ENCODE measurements at regions of chr16 and their contacts with region 1.

Region 1: DNA sequence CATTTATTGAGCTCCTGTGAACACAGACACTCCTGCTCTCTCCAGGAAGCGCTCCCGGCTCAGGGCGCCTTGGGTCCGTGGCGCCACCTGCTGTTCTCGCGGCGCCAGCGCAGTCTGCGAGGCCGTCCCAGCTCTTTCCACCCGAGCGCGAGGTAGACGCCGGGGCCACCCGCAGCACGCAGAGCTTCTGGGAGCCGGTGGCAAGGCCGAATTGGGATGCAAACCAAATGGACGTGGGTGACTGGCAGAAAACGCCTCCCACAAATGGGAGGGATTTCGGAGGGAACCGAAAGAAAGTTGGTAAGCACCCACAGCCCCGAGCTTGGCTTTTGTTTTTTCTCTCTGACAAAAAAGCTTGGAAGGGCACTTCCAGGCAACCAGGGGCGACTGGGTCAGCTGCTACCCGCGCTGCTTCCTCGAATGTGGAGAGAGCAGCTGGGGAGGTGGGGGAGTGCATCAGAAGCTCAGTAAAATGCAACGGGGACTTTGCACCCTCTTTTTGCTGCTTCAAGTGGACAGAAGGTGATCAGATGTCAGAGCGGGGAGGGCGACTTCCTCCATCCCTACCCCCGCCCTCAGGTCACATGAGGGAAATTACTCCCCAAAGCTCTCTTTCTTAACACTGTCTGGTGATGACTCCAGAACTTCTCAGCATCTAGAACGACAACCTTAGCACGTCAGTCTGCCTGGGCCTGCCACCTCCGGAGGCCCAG is 13.5 kb upstream of the N4BP1 start:
- DNase-seq: peak; percentile 71
- H3K4me3 ChIP-seq: peak overlapping the region; percentile 53
- H3K27ac ChIP-seq: peak overlapping the region; percentile 75
- H3K27me3 ChIP-seq: no peaks in the 10 kb centered on the region
- CTCF ChIP-seq: peak; percentile 99

Region 2: DNA sequence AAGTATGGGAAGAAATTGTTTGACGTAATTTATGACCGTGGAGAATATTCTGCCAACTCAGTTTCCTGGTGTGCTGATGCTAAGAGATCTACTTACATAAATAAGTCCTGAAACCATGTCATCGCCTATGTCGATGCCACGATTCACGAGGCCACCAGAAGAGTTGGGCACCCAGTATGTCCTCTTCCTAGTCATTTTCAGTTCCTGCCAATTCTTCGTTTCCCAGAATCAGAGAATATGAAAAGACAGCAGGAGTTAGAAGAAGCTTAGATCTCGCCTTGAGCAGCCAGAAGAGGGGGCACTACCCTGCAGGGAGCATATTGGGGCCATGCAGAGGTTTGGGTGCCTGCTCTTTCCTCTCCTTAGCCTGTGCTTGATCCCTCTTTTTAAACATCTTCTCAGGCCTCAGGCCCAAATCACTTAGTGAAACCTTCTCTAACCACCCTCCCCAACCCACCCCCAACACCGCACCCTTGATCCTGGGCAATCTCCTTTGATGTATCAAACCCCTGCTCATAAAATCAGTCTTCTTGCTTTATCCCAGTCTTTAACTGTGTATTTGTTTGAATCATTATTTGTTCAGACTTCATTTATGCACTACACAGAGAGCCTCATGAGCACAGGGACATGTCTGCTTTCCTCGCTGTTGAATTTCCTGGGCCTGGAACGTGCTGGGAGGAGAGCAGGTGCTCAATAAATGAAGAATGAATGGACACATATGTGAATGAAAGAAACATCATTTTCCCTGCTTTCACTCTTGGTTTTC is 391.6 kb before region 1 on chr16:
- CTCF ChIA-PET with region 1: interaction called, 40 read pairs
- POLR2A ChIA-PET with region 1: no interaction called
- DNase-seq: peak; percentile 2
- H3K4me3 ChIP-seq: no peak overlapping the region
- H3K27ac ChIP-seq: no peak overlapping the region
- H3K27me3 ChIP-seq: no peaks in the 10 kb centered on the region
- CTCF ChIP-seq: peak; percentile 74

Region 3: DNA sequence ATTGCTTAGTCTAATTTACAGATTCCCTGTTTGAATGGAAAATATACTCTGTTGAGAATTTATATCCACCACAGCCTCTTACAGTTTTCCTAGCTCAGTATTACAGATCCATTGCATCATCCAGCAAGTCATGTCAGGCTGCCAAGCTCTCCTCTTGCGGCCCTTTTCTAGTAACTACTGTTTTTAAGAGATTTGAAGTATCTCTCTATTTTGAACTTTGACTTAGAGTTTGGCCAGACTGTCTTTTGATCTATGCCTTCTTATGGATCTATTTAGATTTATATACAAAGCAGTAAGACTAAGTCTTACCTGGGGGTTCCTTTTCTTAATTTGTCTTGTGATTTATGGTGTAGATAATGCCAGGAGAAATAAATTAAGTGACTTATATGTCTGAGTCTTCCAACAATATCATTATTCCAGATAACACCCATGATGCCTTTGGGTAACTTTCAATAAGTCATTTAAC is 323.0 kb before region 1 on chr16:
- CTCF ChIA-PET with region 1: interaction called, 10 read pairs
- POLR2A ChIA-PET with region 1: no interaction called
- DNase-seq: peak; percentile 60
- H3K4me3 ChIP-seq: no peak overlapping the region
- H3K27ac ChIP-seq: no peak overlapping the region
- H3K27me3 ChIP-seq: no peaks in the 10 kb centered on the region
- CTCF ChIP-seq: no peak

Region 4: DNA sequence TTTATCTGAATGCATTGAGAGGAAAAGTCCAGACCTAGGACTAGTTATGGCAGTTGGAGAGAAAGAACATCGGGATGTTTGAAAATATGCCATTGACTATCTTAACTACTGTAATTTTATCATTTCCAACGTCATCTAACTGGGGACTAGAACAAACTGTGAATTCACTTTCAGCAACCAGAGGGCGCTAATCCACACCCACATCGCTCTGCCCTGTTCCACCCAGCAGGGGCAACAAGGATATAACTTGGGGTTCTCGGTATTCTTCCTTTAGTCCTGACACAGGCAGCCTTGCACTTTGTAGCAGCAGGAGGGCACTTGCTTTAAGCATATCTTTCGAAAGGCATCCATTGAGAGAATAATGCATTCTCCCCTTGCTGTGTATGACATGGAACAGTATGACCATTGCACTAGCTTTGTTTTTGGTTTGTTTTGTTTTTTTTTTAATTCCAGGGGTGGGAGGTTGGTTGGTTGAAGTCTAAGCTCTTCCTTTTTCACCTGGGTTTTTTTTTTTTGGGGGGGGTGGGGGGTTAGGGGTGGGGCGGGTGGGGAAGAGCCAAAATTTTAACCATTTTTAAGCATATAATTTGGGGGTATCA is 269.8 kb before region 1 on chr16:
- CTCF ChIA-PET with region 1: interaction called, 173 read pairs
- POLR2A ChIA-PET with region 1: no interaction called
- DNase-seq: peak; percentile 37
- H3K4me3 ChIP-seq: no peak overlapping the region
- H3K27ac ChIP-seq: no peak overlapping the region
- H3K27me3 ChIP-seq: no peaks in the 10 kb centered on the region
- CTCF ChIP-seq: peak; percentile 92

Region 5: GRCh38 chr16:48409839-48410611 is 213.4 kb before region 1 on chr16:
- CTCF ChIA-PET with region 1: interaction called, 24 read pairs
- POLR2A ChIA-PET with region 1: no interaction called
- DNase-seq: peak; percentile 69
- H3K4me3 ChIP-seq: no peak overlapping the region
- H3K27ac ChIP-seq: peak overlapping the region; percentile 69
- H3K27me3 ChIP-seq: no peaks in the 10 kb centered on the region
- CTCF ChIP-seq: no peak

Region 6: DNA sequence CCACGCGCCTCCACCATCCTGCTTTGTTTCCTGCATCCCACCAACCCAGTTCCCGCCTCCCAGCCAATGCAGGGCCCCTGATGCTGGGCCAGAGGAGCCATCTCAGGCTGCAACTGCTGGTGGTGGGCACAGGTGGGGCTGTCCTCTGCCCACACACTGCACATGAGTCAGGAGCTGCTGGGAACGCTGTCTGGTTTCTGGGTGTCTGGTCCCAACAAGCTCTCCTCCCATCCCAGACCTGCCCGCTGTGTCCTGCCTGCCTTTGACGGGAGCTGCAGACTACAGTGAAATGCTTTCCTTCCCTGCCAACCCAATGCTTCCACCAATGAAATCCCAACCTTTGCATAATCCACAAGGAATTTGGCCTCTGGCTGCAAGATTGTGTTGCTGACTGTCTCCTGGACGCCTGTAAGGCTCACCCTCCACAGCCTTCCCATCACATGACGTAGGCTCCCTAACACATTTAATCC is 112.4 kb before region 1 on chr16:
- CTCF ChIA-PET with region 1: no interaction called
- POLR2A ChIA-PET with region 1: no interaction called
- DNase-seq: peak; percentile 34
- H3K4me3 ChIP-seq: no peak overlapping the region
- H3K27ac ChIP-seq: no peak overlapping the region
- H3K27me3 ChIP-seq: peaks cover 2% of the 10 kb centered on the region
- CTCF ChIP-seq: no peak

Region 7: GRCh38 chr16:48556913-48557351 is 66.5 kb before region 1 on chr16:
- CTCF ChIA-PET with region 1: interaction called, 11 read pairs
- POLR2A ChIA-PET with region 1: no interaction called
- DNase-seq: peak; percentile 49
- H3K4me3 ChIP-seq: no peak overlapping the region
- H3K27ac ChIP-seq: no peak overlapping the region
- H3K27me3 ChIP-seq: no peaks in the 10 kb centered on the region
- CTCF ChIP-seq: no peak

Region 8: DNA sequence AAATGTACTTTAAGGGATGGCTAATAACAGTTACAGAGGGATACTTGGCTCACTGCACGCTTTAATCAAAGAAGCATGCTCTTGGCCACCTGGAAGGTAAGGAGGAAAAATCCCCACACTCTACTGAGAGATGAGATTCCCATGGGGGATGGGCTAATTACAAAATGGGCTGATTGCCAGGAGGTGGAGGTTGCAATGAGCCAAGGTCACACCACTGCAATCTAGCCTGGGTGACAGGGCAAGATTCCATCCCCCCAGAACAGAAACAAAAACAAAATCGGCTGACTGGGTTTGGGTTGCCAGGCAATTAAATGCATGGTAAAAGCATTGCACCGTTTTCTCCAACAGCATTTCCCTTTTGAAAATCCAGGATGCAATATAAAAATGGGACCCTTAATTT is 31.5 kb before region 1 on chr16:
- CTCF ChIA-PET with region 1: interaction called, 11 read pairs
- POLR2A ChIA-PET with region 1: no interaction called
- DNase-seq: no peak
- H3K4me3 ChIP-seq: no peak overlapping the region
- H3K27ac ChIP-seq: no peak overlapping the region
- H3K27me3 ChIP-seq: no peaks in the 10 kb centered on the region
- CTCF ChIP-seq: no peak

Region 9: GRCh38 chr16:48641770-48642169 is 18.3 kb after region 1 on chr16:
- CTCF ChIA-PET with region 1: no interaction called
- POLR2A ChIA-PET with region 1: no interaction called
- DNase-seq: no peak
- H3K4me3 ChIP-seq: no peak overlapping the region
- H3K27ac ChIP-seq: no peak overlapping the region
- H3K27me3 ChIP-seq: no peaks in the 10 kb centered on the region
- CTCF ChIP-seq: no peak

Measured in AG04450 (cell line).